Colonic mucosa (tissue), 4 donors: ENCODE measurements at regions of chr22 and their contacts with region 1.

Region 1: GRCh38 chr22:36331306-36331911 is 56.4 kb downstream of the MYH9 start:
- DNase-seq: peak; percentile 75
- H3K4me3 ChIP-seq: no peak overlapping the region
- H3K27ac ChIP-seq: peak overlapping the region; percentile 84
- H3K4me1 ChIP-seq: peaks cover 70% of the 10 kb centered on the region
- H3K27me3 ChIP-seq: no peaks in the 10 kb centered on the region
- CTCF ChIP-seq: no peak

Region 2: GRCh38 chr22:36028646-36029405 is 302.6 kb before region 1 on chr22 and contains the start of gene RBFOX2:
- intact Hi-C with region 1: no loop called
- DNase-seq: peak; percentile 98
- H3K4me3 ChIP-seq: peak within 1 kb of the TSS; percentile 68
- H3K27ac ChIP-seq: peak within 1 kb of the TSS; percentile 76
- H3K4me1 ChIP-seq: no peaks in the 10 kb centered on the region
- H3K27me3 ChIP-seq: no peaks in the 10 kb centered on the region
- CTCF ChIP-seq: no peak
- total RNA-seq, gene RBFOX2: 44.4 to 60.2 TPM

Region 3: GRCh38 chr22:36374603-36375024 is 43.2 kb after region 1 on chr22:
- intact Hi-C with region 1: loop called (anchors 5 kb)
- DNase-seq: no peak
- H3K4me3 ChIP-seq: no peak overlapping the region
- H3K27ac ChIP-seq: peak overlapping the region; percentile 93
- H3K4me1 ChIP-seq: peaks cover 46% of the 10 kb centered on the region
- H3K27me3 ChIP-seq: no peaks in the 10 kb centered on the region
- CTCF ChIP-seq: no peak

Region 4: DNA sequence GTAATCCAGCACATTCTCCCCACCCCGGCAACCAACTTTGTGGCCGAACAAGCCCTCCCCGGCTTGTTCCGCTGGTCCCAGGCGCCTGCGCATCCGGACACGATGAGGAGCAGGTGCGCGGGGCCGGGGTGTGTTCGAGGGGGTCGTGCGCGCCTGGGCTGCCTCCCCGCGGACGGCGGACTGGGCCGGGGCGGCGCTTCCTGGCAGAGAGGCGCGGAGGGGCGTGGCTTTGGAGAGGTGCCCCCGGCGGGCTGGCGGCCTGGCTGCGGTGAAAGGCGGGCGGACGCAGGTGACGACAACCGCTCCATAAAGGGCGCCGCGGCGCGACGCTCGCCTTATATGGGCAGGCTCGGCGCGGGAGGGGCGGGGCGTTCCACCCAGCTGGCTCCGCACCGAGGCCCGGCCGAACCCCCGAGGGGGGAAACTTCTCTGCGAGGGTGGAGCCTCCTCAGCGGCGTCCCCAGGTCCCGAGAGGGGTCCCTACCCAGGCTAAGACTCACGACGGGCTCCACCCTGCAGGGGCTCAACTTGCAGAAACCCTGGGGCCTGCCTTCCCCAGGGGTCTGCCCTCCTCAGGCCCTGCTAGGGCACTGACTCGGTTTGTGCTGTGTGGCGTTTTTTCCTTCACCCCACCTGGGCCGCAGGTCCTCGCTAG is 123.6 kb after region 1 on chr22:
- intact Hi-C with region 1: loop called (anchors 5 kb)
- DNase-seq: peak; percentile 97
- H3K4me3 ChIP-seq: peak overlapping the region; percentile 56
- H3K27ac ChIP-seq: peak overlapping the region; percentile 95
- H3K4me1 ChIP-seq: peaks cover 13% of the 10 kb centered on the region
- H3K27me3 ChIP-seq: no peaks in the 10 kb centered on the region
- CTCF ChIP-seq: no peak